ENCODE measurements at regions of chrX and their contacts with region 1.

Region 1: GRCh38 chrX:44872817-44873414 is at the start of gene KDM6A:
- DNase-seq: peak; percentile 99
- H3K4me3 ChIP-seq: peak within 1 kb of the TSS; percentile 78 to 100 (median 83)
- H3K27ac ChIP-seq: peak within 1 kb of the TSS; percentile 92
- H3K4me1 ChIP-seq: peaks cover 8% of the 10 kb centered on the region
- H3K27me3 ChIP-seq: no peaks in the 10 kb centered on the region
- CTCF ChIP-seq: no peak
- total RNA-seq, gene KDM6A: 45.4 to 46.8 TPM

Region 2: GRCh38 chrX:44542567-44543325 is 330.2 kb before region 1 on chrX and contains the start of gene FUNDC1:
- CTCF ChIA-PET with region 1: no interaction called
- dilution Hi-C with region 1: no loop called
- in situ Hi-C with region 1: no loop called
- intact Hi-C with region 1: loop called (anchors 2 kb)
- DNase-seq: peak; percentile 91
- H3K4me3 ChIP-seq: peak within 1 kb of the TSS; percentile 63 to 81 (median 79)
- H3K27ac ChIP-seq: peak within 1 kb of the TSS; percentile 72
- H3K4me1 ChIP-seq: peaks cover 4% of the 10 kb centered on the region
- H3K27me3 ChIP-seq: no peaks in the 10 kb centered on the region
- CTCF ChIP-seq: peak in 1 of 2 donors; percentile 55
- total RNA-seq, gene FUNDC1: 14.5 to 16.4 TPM

Region 3: DNA sequence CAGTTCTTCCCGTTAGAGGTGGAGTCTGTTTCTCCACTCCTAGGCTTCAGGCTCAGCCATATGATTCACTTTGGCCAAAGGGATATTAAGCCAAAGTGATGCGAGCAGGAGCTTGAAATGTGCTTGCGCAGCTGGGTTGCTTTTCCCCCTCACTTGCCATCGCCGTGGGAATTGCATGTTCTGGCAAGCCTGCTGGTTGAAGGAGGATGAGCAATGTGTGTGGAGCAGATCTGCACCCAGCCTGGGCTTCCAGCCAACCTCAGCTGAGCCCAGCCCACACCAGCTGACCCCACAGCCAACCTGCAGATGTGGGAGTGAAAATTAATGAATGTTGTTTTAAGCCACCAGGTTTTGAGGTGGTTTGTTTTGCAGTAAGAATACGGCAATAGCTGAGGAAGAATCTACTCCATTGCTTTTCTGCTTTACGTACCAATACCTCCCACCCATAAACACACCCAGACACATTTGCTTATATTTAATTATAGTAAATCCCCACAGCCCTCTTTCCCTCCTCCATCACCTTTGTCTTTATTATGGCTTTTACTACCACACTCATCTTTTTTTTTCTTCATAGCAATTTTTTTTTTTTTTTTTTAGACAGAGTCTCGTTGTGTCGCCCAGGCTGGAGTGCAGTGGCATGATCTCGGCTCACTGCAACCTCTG is 197.4 kb before region 1 on chrX:
- CTCF ChIA-PET with region 1: no interaction called
- dilution Hi-C with region 1: no loop called
- in situ Hi-C with region 1: no loop called
- intact Hi-C with region 1: loop called (anchors 10 kb)
- DNase-seq: peak; percentile 98
- H3K4me3 ChIP-seq: no peak overlapping the region
- H3K27ac ChIP-seq: no peak overlapping the region
- H3K4me1 ChIP-seq: peaks cover 11% of the 10 kb centered on the region
- H3K27me3 ChIP-seq: no peaks in the 10 kb centered on the region
- CTCF ChIP-seq: peak in 1 of 2 donors; percentile 6

Region 4: DNA sequence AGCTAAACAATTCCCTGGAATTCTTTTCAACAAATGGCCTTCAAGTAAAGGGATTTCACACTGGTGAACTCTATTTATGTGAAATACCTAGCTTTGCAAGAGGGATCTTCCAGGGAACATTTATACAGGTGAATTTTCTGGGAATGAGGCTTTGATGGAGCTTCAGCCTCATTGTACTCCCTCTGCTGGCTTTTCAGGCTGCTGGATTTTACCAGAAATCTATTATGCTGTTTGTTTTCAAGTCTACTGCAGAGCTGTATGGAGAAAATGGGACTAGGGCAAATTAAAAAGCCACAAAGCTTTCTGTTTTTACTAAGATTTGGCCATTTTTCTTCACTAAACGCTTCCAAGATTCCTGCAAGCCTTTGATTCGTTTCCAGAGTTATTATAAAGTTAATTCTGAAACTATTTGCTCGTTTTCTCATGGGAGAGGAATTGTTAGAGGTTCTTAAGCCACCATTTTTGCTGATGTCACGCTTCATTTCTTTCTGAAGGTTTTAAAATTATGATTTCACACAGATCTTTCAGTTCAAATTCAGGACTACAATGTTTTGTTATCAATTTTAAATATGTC is 31.7 kb after region 1 on chrX:
- CTCF ChIA-PET with region 1: interaction called, 30 read pairs
- dilution Hi-C with region 1: no loop called
- in situ Hi-C with region 1: no loop called
- intact Hi-C with region 1: no loop called
- DNase-seq: no peak
- H3K4me3 ChIP-seq: no peak overlapping the region
- H3K27ac ChIP-seq: no peak overlapping the region
- H3K4me1 ChIP-seq: peaks cover 16% of the 10 kb centered on the region
- H3K27me3 ChIP-seq: no peaks in the 10 kb centered on the region
- CTCF ChIP-seq: peak in 1 of 2 donors; percentile 35

Region 5: DNA sequence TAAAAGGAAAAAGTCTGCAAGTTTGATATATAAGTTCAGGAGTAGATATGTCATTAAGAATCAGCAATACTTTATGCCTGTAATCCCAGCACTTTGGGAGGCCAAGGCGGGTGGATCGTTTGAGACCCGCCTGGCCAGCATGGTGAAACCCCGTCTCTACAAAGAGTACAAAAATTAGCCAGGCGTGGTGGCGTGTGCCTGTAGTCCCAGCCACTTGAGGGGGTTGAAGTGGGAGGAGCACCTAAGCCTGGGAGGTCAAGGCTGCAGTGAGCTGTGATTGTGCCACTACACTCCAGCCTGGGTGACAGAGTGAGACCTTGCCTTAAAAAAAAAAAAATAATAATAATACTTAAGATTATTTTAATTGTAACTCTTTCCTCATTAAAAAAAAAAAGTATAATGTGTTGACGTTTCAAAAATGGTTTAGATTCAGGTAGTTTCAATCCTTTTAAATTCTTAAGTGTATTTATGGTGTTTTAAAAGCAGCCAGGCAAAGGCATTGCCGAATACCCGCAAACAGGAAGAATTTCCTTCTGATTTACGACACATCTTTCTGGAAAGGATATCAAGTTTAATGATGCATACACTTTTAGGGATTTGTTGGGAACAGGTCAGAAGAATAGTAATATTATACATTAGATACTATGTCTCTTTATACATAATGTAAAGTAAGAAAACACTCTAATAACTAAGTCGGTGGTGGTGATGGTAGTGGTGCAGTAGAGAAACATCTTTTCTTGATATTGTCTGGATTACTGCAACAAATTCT is 81.0 kb after region 1 on chrX:
- CTCF ChIA-PET with region 1: no interaction called
- dilution Hi-C with region 1: no loop called
- in situ Hi-C with region 1: no loop called
- intact Hi-C with region 1: loop called (anchors 2 kb)
- DNase-seq: no peak
- H3K4me3 ChIP-seq: no peak overlapping the region
- H3K27ac ChIP-seq: no peak overlapping the region
- H3K4me1 ChIP-seq: peaks cover 11% of the 10 kb centered on the region
- H3K27me3 ChIP-seq: no peaks in the 10 kb centered on the region
- CTCF ChIP-seq: no peak

Region 6: GRCh38 chrX:45070116-45071007 is 197.4 kb after region 1 on chrX:
- CTCF ChIA-PET with region 1: no interaction called
- dilution Hi-C with region 1: no loop called
- in situ Hi-C with region 1: no loop called
- intact Hi-C with region 1: loop called (anchors 2 kb)
- DNase-seq: peak; percentile 29
- H3K4me3 ChIP-seq: no peak overlapping the region
- H3K27ac ChIP-seq: no peak overlapping the region
- H3K4me1 ChIP-seq: no peaks in the 10 kb centered on the region
- H3K27me3 ChIP-seq: no peaks in the 10 kb centered on the region
- CTCF ChIP-seq: peak; percentile 69 to 72